ENCODE measurements at regions of chr2 and their contacts with region 1.

Region 1: GRCh38 chr2:221948076-221948475 is 350.7 kb downstream of the PAX3 start:
- DNase-seq: no peak
- ATAC-seq: no peak
- H3K4me3 ChIP-seq: no peak overlapping the region
- H3K4me3 Mint-ChIP-seq: no peak overlapping the region
- H3K27ac ChIP-seq: no peak overlapping the region
- H3K27ac Mint-ChIP-seq: no peak overlapping the region
- H3K4me1 ChIP-seq: no peaks in the 10 kb centered on the region
- H3K4me1 Mint-ChIP-seq: no peaks in the 10 kb centered on the region
- H3K27me3 ChIP-seq: no peaks in the 10 kb centered on the region
- H3K27me3 Mint-ChIP-seq: no peaks in the 10 kb centered on the region
- CTCF ChIP-seq: no peak

Region 2: DNA sequence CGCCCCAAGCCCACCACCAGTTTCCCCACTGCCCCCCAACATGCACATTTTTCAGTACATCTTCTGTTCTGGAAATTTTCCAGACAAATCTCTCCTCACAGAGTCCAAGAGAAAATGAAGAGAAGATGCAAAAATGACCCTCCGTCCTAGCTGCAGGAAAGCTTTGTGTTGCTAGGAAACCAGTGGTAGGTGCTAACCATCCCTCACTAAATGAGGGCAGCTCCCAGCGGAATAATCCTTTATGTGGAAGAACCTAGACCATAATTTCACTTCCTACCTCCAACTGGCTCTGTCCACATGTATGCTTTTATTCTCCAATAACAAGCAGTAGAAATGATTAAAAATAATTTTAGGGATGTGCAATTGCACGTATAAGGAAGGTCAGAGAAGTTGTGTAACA is 64.1 kb before region 1 on chr2:
- CTCF ChIA-PET with region 1: no interaction called
- POLR2A ChIA-PET with region 1: no interaction called
- intact Hi-C with region 1: no loop called
- DNase-seq: no peak
- ATAC-seq: no peak
- H3K4me3 ChIP-seq: no peak overlapping the region
- H3K4me3 Mint-ChIP-seq: no peak overlapping the region
- H3K27ac ChIP-seq: no peak overlapping the region
- H3K27ac Mint-ChIP-seq: no peak overlapping the region
- H3K4me1 ChIP-seq: no peaks in the 10 kb centered on the region
- H3K4me1 Mint-ChIP-seq: no peaks in the 10 kb centered on the region
- H3K27me3 ChIP-seq: no peaks in the 10 kb centered on the region
- H3K27me3 Mint-ChIP-seq: peaks cover 4% of the 10 kb centered on the region
- CTCF ChIP-seq: no peak

Region 3: GRCh38 chr2:221969087-221969829 is 21.2 kb after region 1 on chr2:
- CTCF ChIA-PET with region 1: no interaction called
- POLR2A ChIA-PET with region 1: no interaction called
- intact Hi-C with region 1: loop called (anchors 1 kb)
- DNase-seq: peak; percentile 8
- ATAC-seq: no peak
- H3K4me3 ChIP-seq: no peak overlapping the region
- H3K4me3 Mint-ChIP-seq: no peak overlapping the region
- H3K27ac ChIP-seq: no peak overlapping the region
- H3K27ac Mint-ChIP-seq: no peak overlapping the region
- H3K4me1 ChIP-seq: no peaks in the 10 kb centered on the region
- H3K4me1 Mint-ChIP-seq: no peaks in the 10 kb centered on the region
- H3K27me3 ChIP-seq: no peaks in the 10 kb centered on the region
- H3K27me3 Mint-ChIP-seq: peaks cover 7% of the 10 kb centered on the region
- CTCF ChIP-seq: peak; percentile 59

Measured in B cell (primary cell).